ENCODE measurements at regions of chr19 and their contacts with region 1.

Region 1: GRCh38 chr19:43463381-43464136 is 1.8 kb downstream of the LYPD3 start:
- DNase-seq: peak; percentile 97 to 98
- H3K4me3 ChIP-seq: peak overlapping the region; percentile 64 to 71
- H3K27ac ChIP-seq: peak overlapping the region; percentile 82 to 88
- H3K4me1 ChIP-seq: peaks cover 0 to 22% (median 11%) of the 10 kb centered on the region in 4 donors
- H3K27me3 ChIP-seq: peaks cover 0 to 9% of the 10 kb centered on the region in 2 donors
- CTCF ChIP-seq: no peak

Region 2: DNA sequence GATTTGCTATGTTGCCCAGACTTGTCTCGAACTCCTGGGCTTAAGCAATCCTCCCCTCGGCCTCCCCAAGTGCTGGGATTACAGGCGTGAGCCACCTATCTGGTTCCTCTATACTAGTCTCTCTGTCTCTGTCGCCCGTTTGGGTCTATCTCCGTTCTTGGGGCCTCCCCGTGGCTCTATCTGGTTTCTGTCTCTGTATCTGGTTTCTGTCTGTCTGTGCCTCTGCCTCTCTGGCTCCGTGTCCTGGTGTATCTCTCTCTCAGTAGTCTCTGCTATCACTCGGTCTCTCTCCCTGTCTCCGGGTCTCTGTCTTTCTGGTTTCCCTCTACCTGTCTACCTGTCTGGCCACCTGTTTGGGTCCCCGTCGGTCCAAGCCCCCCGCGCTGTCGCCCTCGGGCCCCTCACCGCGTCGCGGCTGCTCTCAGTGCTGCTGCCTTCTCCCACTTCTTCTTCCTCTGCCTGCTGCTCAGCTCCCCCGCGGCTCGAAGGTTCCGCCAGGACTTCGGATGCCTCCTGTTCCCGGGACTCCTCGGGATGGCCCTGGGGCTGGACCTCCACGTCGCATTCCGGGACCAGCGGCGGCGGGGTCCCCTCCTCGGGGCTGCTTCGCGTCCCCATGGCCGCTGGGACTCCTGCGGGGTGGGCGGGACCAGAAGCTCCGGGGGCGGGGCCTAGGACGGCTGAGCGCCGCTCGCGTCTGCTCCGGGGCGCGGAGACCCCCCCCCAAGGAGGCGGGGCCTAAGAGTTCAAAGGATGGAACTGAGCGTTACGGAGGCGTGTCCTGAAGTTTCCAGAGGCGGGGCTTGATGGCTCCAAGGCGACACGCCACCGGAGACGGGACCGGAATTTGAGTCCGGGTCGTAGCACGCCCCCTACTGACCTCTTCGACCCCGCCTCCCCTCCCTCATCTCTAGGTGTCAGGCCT is 40.2 kb after region 1 on chr19:
- intact Hi-C with region 1: loop called (anchors 5 kb)
- DNase-seq: peak; percentile 98
- H3K4me3 ChIP-seq: peak overlapping the region; percentile 88 to 91
- H3K27ac ChIP-seq: peak overlapping the region; percentile 95 to 99
- H3K4me1 ChIP-seq: peaks cover 0 to 20% (median 14%) of the 10 kb centered on the region in 4 donors
- H3K27me3 ChIP-seq: no peaks in the 10 kb centered on the region
- CTCF ChIP-seq: no peak